Common myeloid progenitor, CD34-positive (primary cell): ENCODE measurements at regions of chr18 and their contacts with region 1.

Region 1: DNA sequence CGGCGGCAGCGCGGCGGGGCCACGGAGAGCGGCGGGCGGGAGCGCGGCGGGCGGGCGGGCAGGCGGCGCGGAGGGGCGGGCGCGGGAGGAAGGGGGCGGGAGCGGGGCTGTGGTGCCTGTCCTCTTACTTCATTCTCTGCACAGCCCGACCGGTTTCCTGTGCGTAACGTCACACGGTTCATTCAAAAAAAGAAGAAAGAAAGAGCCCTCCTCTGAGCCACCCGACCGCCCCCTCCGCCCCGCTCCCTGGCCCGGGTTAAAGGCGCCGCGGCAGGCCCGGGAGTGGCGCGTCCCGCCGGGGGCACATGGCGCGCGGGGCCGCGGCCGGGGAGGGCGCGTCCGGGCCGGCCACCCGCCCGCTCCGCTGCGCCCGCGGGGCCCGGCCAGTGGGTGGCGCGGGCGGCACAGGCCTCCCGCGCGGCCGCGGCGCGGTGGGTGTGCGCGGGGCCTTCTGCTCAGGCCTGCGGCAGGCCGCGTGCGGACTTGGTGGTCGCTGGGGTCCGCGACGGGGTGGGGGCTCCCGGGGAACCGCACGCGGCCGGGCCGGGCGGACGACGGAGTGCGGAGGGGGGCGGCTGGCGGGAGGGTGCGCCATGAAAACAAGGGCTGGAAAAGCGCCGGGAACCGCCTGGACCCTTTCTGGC is 599 bp upstream of the BCL2 start:
- DNase-seq: peak; percentile 91 to 96 (median 95)
- H3K4me3 ChIP-seq: peak overlapping the region; percentile 77 to 97 (median 89)
- H3K27ac ChIP-seq: peak overlapping the region; percentile 74 to 86
- H3K4me1 ChIP-seq: peaks cover 20 to 55% (median 45%) of the 10 kb centered on the region in 4 experiments
- H3K27me3 ChIP-seq: no peaks in the 10 kb centered on the region

Region 2: GRCh38 chr18:63016270-63016669 is 303.9 kb before region 1 on chr18:
- CTCF ChIA-PET with region 1: interaction called, 120 read pairs
- POLR2A ChIA-PET with region 1: interaction called, 3 read pairs
- DNase-seq: peak; percentile 73 to 84 (median 78)
- H3K4me3 ChIP-seq: no peak overlapping the region
- H3K27ac ChIP-seq: no peak overlapping the region
- H3K4me1 ChIP-seq: no peaks in the 10 kb centered on the region
- H3K27me3 ChIP-seq: no peaks in the 10 kb centered on the region

Region 3: GRCh38 chr18:63025251-63026090 is 294.7 kb before region 1 on chr18:
- CTCF ChIA-PET with region 1: interaction called, 120 read pairs
- POLR2A ChIA-PET with region 1: no interaction called
- DNase-seq: peak in 2 of 3 donors; percentile 34 to 49
- H3K4me3 ChIP-seq: no peak overlapping the region
- H3K27ac ChIP-seq: no peak overlapping the region
- H3K4me1 ChIP-seq: peaks cover 0 to 9% (median 4%) of the 10 kb centered on the region in 4 experiments
- H3K27me3 ChIP-seq: no peaks in the 10 kb centered on the region

Region 4: DNA sequence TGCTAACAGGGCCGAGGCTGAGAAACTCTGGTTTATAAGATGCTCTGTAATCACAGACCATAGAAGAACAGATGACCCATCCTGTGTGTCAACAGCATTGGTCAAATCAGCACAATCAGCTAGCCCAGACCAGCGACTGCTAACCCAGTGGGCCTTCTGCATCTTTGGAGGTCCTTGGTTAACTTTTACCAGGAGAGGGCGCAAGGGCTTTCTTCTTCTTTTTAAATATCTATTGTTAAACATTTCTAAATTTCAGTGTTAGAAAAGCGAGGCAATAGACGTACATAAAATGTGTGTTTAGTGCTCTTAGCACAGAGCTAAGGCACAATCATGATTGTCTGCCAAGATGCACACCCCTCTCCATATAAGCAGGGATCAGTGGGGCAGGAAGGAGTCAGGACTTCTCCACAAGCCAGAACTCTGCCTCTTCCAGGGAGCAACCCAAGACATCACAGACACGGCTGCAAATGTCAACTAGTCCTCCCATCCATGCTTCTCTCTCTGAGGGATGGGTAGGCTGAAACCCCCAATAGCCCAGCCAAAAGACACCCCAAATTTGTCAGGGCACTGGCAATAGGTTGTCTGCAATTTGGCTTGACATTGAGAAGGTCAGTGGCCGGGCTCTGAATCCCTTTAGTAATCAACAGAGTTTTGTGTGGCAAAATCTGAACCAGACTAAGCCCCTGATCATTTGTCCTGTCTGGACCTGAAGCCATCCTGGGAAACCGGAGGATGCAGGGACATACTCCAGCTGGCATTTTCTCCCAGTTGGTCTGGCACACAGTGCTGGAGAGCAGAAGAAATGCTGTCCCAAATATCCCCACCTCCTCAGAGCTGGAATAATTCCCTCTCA is 188.8 kb before region 1 on chr18:
- CTCF ChIA-PET with region 1: interaction called, 37 read pairs
- POLR2A ChIA-PET with region 1: no interaction called
- DNase-seq: peak; percentile 63 to 76 (median 70)
- H3K4me3 ChIP-seq: no peak overlapping the region
- H3K27ac ChIP-seq: no peak overlapping the region
- H3K4me1 ChIP-seq: peaks cover 0 to 24% (median 13%) of the 10 kb centered on the region in 4 experiments
- H3K27me3 ChIP-seq: no peaks in the 10 kb centered on the region

Region 5: GRCh38 chr18:63155169-63155852 is 164.9 kb before region 1 on chr18:
- CTCF ChIA-PET with region 1: interaction called, 17 read pairs
- POLR2A ChIA-PET with region 1: no interaction called
- DNase-seq: peak; percentile 71 to 81 (median 79)
- H3K4me3 ChIP-seq: peak overlapping the region in 4 of 7 experiments; percentile 30 to 71 (median 58)
- H3K27ac ChIP-seq: no peak overlapping the region
- H3K4me1 ChIP-seq: peaks cover 0 to 13% (median 5%) of the 10 kb centered on the region in 4 experiments
- H3K27me3 ChIP-seq: no peaks in the 10 kb centered on the region

Region 6: GRCh38 chr18:63177919-63178821 is 142.0 kb before region 1 on chr18:
- CTCF ChIA-PET with region 1: interaction called, 14 read pairs
- POLR2A ChIA-PET with region 1: no interaction called
- DNase-seq: peak in 2 of 3 donors; percentile 52 to 57
- H3K4me3 ChIP-seq: no peak overlapping the region
- H3K27ac ChIP-seq: no peak overlapping the region
- H3K4me1 ChIP-seq: peaks cover 4 to 23% (median 13%) of the 10 kb centered on the region in 4 experiments
- H3K27me3 ChIP-seq: no peaks in the 10 kb centered on the region

Region 7: GRCh38 chr18:63339920-63340484 is 19.8 kb after region 1 on chr18:
- CTCF ChIA-PET with region 1: interaction called, 11 read pairs
- POLR2A ChIA-PET with region 1: interaction called, 6 read pairs
- DNase-seq: peak; percentile 70 to 84 (median 78)
- H3K4me3 ChIP-seq: no peak overlapping the region
- H3K27ac ChIP-seq: no peak overlapping the region
- H3K4me1 ChIP-seq: no peaks in the 10 kb centered on the region
- H3K27me3 ChIP-seq: no peaks in the 10 kb centered on the region

Region 8: GRCh38 chr18:63476666-63477065 is 156.5 kb after region 1 on chr18 and contains the start of gene SERPINB5:
- CTCF ChIA-PET with region 1: no interaction called
- POLR2A ChIA-PET with region 1: no interaction called
- DNase-seq: no peak
- H3K4me3 ChIP-seq: no peak within 1 kb of the TSS
- H3K27ac ChIP-seq: no peak within 1 kb of the TSS
- H3K4me1 ChIP-seq: peaks cover 0 to 4% (median 1%) of the 10 kb centered on the region in 4 experiments
- H3K27me3 ChIP-seq: peaks cover 0 to 2% (median 0%) of the 10 kb centered on the region in 5 experiments

Region 9: DNA sequence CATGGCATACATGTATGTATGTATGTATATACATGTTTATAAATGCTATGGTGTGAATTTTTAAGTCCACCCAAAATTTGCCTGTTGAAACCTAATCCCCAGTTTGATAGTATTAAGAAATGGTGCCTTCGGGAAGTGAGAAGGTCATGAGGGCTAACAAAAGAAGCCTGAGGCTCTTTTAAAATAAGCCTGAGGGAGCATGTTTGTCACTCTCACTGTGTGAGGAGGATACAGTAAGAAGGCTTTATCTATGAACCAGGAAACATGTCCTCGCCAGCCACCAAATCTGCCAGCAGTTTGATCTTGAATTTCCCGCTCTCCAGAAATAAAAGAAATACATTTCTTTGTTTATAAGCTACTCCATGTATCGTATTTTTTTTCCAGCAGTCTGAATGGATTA is 991.7 kb after region 1 on chr18:
- CTCF ChIA-PET with region 1: no interaction called
- POLR2A ChIA-PET with region 1: no interaction called
- DNase-seq: no peak
- H3K4me3 ChIP-seq: no peak overlapping the region
- H3K27ac ChIP-seq: no peak overlapping the region
- H3K4me1 ChIP-seq: peaks cover 0 to 2% (median 0%) of the 10 kb centered on the region in 4 experiments
- H3K27me3 ChIP-seq: no peaks in the 10 kb centered on the region